Natural killer cell (primary cell): ENCODE measurements at regions of chr17 and their contacts with region 1.

Region 1: GRCh38 chr17:39863918-39864746 is at the start of gene IKZF3:
- DNase-seq: peak; percentile 81 to 95
- ATAC-seq: peak; percentile 89 to 94 (median 92)
- H3K4me3 ChIP-seq: peak within 1 kb of the TSS; percentile 95
- H3K4me3 Mint-ChIP-seq: peak within 1 kb of the TSS; percentile 98
- H3K27ac ChIP-seq: peak within 1 kb of the TSS; percentile 97
- H3K27ac Mint-ChIP-seq: peak within 1 kb of the TSS; percentile 91 to 99
- H3K4me1 ChIP-seq: peaks cover 24% of the 10 kb centered on the region
- H3K4me1 Mint-ChIP-seq: peaks cover 52 to 57% of the 10 kb centered on the region in 2 donors
- H3K27me3 ChIP-seq: peaks cover 3% of the 10 kb centered on the region
- H3K27me3 Mint-ChIP-seq: peaks cover 0 to 4% of the 10 kb centered on the region in 2 donors
- CTCF ChIP-seq: peak; percentile 49
- total RNA-seq, gene IKZF3: 134 to 162 (median 139) TPM

Region 2: DNA sequence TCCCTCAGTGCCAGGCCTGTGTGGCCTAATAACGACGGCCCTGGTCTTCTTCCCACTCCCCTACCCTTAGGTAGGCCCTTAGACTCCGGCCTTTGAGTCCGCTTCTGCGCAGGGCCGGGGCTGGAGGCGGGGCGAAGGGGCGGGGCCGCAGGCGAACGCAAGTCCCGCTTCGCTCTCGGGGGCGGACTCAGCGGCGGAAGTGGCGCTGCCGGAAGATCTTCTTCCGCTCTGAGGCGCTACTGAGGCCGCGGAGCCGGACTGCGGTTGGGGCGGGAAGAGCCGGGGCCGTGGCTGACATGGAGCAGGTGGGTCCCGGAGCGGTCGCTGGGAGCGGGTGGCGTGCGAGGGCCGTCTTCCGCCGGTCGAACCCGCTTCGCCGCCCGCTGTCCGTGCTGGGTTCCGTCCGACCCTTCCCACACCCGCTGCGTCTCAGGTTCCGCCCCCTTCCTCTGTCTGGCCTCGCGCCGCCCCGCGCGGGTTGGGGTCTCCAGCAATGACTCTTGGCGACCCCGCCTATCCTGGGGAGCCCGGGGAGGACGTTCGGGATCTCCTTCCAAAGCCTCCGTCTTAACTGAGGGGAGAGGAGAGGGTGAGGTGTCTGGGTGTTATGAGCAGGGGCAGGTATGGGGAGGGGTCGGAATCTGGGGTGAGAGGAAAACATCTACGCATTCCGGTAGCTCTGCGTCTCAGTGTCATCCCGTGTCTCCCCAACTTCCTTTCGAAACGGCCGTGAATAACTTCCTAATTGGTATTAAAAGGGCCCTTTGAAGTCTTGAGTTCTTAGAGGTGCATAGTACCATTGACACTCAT is 227.0 kb before region 1 on chr17 and contains the start of gene STARD3:
- intact Hi-C with region 1: no loop called
- DNase-seq: peak; percentile 87 to 95
- ATAC-seq: peak; percentile 91 to 95 (median 92)
- H3K4me3 ChIP-seq: peak within 1 kb of the TSS; percentile 86
- H3K4me3 Mint-ChIP-seq: peak within 1 kb of the TSS; percentile 95
- H3K27ac ChIP-seq: peak within 1 kb of the TSS; percentile 97
- H3K27ac Mint-ChIP-seq: peak within 1 kb of the TSS; percentile 86 to 92
- H3K4me1 ChIP-seq: peaks cover 60% of the 10 kb centered on the region
- H3K4me1 Mint-ChIP-seq: peaks cover 48 to 61% of the 10 kb centered on the region in 2 donors
- H3K27me3 ChIP-seq: no peaks in the 10 kb centered on the region
- H3K27me3 Mint-ChIP-seq: no peaks in the 10 kb centered on the region
- CTCF ChIP-seq: no peak
- total RNA-seq, gene STARD3: 97.1 to 115 (median 105) TPM

Region 3: DNA sequence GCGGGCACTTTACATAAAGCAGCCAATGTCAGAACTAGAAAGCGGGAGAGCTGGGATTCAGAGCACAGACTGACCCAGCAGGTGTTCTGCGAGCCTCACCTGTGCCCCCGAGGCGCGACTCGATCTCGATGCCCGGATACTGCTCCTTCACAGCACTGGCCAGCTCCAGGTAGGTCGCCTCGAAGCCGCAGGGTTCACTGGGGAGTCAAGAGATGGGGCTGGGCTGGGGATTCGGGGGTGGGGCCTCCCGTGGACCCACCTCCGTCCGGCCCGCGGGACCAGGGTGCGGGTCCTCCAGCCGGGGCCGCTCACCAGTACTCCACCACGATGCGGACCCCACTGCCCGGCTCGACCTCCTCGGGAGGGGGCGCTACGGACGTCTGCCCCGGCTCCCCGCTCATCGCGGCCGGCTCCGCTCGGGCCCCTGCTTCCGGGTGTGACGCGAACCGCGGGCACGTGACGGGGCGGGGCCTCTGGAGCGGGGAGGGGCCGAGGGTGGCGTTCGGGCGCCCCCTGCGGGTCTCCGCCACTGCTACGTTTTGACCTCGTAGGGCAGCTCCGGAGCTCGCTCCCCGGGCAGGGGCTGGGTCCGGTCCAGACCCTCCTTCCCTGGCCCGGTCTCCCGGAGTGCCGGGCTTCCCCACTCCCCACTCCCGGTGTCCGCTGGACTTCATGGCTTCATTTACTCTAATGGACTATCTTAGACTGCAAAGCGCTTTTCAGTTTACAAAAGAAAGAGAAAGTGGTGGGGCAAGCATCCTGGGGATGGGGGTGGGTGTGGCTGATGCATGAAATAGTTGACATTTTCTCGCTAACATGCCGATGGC is 133.8 kb before region 1 on chr17 and contains the start of gene MIEN1:
- intact Hi-C with region 1: loop called (anchors 2 kb)
- DNase-seq: peak; percentile 95 to 99
- ATAC-seq: peak; percentile 94 to 99 (median 95)
- H3K4me3 ChIP-seq: peak within 1 kb of the TSS; percentile 60
- H3K4me3 Mint-ChIP-seq: peak within 1 kb of the TSS; percentile 89
- H3K27ac ChIP-seq: peak within 1 kb of the TSS; percentile 86
- H3K27ac Mint-ChIP-seq: peak within 1 kb of the TSS; percentile 89 to 96
- H3K4me1 ChIP-seq: peaks cover 20% of the 10 kb centered on the region
- H3K4me1 Mint-ChIP-seq: peaks cover 18 to 41% of the 10 kb centered on the region in 2 donors
- H3K27me3 ChIP-seq: no peaks in the 10 kb centered on the region
- H3K27me3 Mint-ChIP-seq: no peaks in the 10 kb centered on the region
- CTCF ChIP-seq: peak; percentile 90
- total RNA-seq, gene MIEN1: 48.8 to 55.2 (median 51.6) TPM

Region 4: GRCh38 chr17:39794249-39794970 is 69.7 kb before region 1 on chr17:
- intact Hi-C with region 1: no loop called
- DNase-seq: peak in 1 of 2 donors; percentile 70
- ATAC-seq: peak; percentile 50 to 73 (median 52)
- H3K4me3 ChIP-seq: no peak overlapping the region
- H3K4me3 Mint-ChIP-seq: peak overlapping the region; percentile 45
- H3K27ac ChIP-seq: peak overlapping the region; percentile 72
- H3K27ac Mint-ChIP-seq: peak overlapping the region; percentile 64 to 69
- H3K4me1 ChIP-seq: peaks cover 10% of the 10 kb centered on the region
- H3K4me1 Mint-ChIP-seq: peaks cover 40 to 66% of the 10 kb centered on the region in 2 donors
- H3K27me3 ChIP-seq: no peaks in the 10 kb centered on the region
- H3K27me3 Mint-ChIP-seq: no peaks in the 10 kb centered on the region
- CTCF ChIP-seq: no peak

Region 5: DNA sequence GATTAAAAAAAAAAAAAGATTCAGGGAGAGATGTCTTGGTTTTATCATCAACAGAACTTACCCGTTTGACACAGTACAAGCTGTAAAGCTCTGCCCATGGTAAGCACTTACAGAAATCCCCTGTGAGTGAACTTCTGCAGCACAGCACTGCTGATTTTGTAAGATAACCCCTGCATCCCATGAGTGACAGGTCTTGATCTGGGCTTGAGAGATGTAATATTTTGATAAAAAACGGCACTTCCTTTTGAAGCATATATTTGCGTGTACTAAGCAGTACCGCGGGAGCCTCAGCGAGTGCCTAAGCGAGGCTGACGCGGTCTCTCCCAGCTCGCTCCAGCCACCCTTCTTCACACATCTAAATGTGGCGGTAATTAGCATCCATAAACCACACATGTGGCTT is 50.5 kb before region 1 on chr17:
- intact Hi-C with region 1: loop called (anchors 2 kb)
- DNase-seq: peak; percentile 52 to 94
- ATAC-seq: peak; percentile 89 to 96 (median 95)
- H3K4me3 ChIP-seq: no peak overlapping the region
- H3K4me3 Mint-ChIP-seq: peak overlapping the region; percentile 86
- H3K27ac ChIP-seq: peak overlapping the region; percentile 71
- H3K27ac Mint-ChIP-seq: peak overlapping the region; percentile 91 to 95
- H3K4me1 ChIP-seq: peaks cover 25% of the 10 kb centered on the region
- H3K4me1 Mint-ChIP-seq: peaks cover 58 to 60% of the 10 kb centered on the region in 2 donors
- H3K27me3 ChIP-seq: no peaks in the 10 kb centered on the region
- H3K27me3 Mint-ChIP-seq: no peaks in the 10 kb centered on the region
- CTCF ChIP-seq: no peak

Region 6: DNA sequence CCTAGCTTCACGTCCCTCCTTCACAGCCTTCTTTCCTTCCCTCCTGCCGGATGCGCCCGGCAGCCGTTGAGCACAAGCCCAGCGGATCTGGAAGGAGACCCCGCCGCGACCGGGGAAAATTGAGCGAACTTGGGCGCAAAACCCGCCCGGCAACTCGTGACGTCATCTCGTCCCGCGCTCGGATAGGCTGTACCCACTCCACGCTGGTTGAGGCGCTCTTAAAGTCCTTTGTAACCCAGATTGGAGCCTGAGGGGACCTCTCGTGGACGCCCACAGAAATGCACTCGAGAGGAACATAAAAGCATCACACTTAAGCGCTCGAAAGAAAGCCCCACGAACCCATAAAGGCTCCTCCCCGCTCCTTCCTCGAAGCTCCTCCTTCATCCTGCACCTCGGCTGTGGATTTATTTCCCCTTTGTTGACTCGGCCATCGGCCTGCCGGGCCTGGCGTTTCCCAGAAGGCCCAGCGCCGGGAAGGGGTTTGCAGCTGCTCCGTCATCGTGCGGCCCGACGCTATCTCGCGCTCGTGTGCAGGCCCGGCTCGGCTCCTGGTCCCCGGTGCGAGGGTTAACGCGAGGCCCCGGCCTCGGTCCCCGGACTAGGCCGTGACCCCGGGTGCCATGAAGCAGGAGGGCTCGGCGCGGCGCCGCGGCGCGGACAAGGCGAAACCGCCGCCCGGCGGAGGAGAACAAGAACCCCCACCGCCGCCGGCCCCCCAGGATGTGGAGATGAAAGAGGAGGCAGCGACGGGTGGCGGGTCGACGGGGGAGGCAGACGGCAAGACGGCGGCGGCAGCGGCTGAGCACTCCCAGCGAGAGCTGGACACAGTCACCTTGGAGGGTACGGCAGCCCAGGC is 116.4 kb after region 1 on chr17 and contains the start of gene PSMD3:
- intact Hi-C with region 1: loop called (anchors 2 kb)
- DNase-seq: peak; percentile 97 to 100
- ATAC-seq: peak; percentile 89 to 97 (median 91)
- H3K4me3 ChIP-seq: peak within 1 kb of the TSS; percentile 70
- H3K4me3 Mint-ChIP-seq: peak within 1 kb of the TSS; percentile 98
- H3K27ac ChIP-seq: peak within 1 kb of the TSS; percentile 91
- H3K27ac Mint-ChIP-seq: peak within 1 kb of the TSS; percentile 99
- H3K4me1 ChIP-seq: peaks cover 18% of the 10 kb centered on the region
- H3K4me1 Mint-ChIP-seq: peaks cover 27 to 29% of the 10 kb centered on the region in 2 donors
- H3K27me3 ChIP-seq: no peaks in the 10 kb centered on the region
- H3K27me3 Mint-ChIP-seq: no peaks in the 10 kb centered on the region
- CTCF ChIP-seq: peak; percentile 71
- total RNA-seq, gene PSMD3: 66.1 to 83.8 (median 78.9) TPM

Region 7: GRCh38 chr17:40098846-40099618 is 234.9 kb after region 1 on chr17:
- intact Hi-C with region 1: no loop called
- DNase-seq: peak; percentile 98 to 99
- ATAC-seq: peak; percentile 65 to 83 (median 70)
- H3K4me3 ChIP-seq: peak overlapping the region; percentile 55
- H3K4me3 Mint-ChIP-seq: peak overlapping the region; percentile 98
- H3K27ac ChIP-seq: peak overlapping the region; percentile 90
- H3K27ac Mint-ChIP-seq: peak overlapping the region; percentile 94 to 96
- H3K4me1 ChIP-seq: peaks cover 87% of the 10 kb centered on the region
- H3K4me1 Mint-ChIP-seq: peaks cover 67 to 75% of the 10 kb centered on the region in 2 donors
- H3K27me3 ChIP-seq: no peaks in the 10 kb centered on the region
- H3K27me3 Mint-ChIP-seq: no peaks in the 10 kb centered on the region
- CTCF ChIP-seq: no peak